ENCODE measurements at regions of chr2 and their contacts with region 1.

Region 1: DNA sequence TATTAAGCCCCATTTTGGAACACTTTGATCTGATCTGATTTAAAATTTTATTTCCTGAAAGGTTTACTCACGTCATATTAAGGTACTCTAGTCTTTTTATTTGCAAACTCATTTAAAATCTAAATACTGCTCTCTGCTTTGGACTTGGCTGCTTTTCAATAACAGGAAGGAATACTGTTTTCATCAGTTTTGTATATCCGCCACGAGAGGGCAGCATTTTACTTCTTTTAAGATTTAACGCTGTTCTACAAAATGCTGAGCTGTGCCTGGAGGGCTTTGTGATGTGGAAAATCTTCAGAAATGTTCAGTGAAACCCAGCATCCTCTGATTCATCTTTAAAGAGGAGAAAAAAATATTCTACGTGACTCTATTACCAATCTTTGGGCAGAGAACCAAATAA is 37.5 kb upstream of the SLC38A11 start:
- DNase-seq: peak; percentile 12
- ATAC-seq: peak; percentile 56; the same call in 1 of the 2 replicates
- H3K4me3 ChIP-seq: no peak overlapping the region
- H3K27ac ChIP-seq: no peak overlapping the region
- H3K4me1 ChIP-seq: no peaks in the 10 kb centered on the region
- H3K27me3 ChIP-seq: no peaks in the 10 kb centered on the region
- CTCF ChIP-seq: peak; percentile 35; the same call in 1 of the 2 replicates

Region 2: GRCh38 chr2:164456619-164457018 is 536.2 kb before region 1 on chr2:
- CTCF ChIA-PET with region 1: no interaction called
- POLR2A ChIA-PET with region 1: no interaction called
- in situ Hi-C with region 1: no loop called
- intact Hi-C with region 1: no loop called
- DNase-seq: no peak
- ATAC-seq: no peak
- H3K4me3 ChIP-seq: no peak overlapping the region
- H3K27ac ChIP-seq: no peak overlapping the region
- H3K4me1 ChIP-seq: no peaks in the 10 kb centered on the region
- H3K27me3 ChIP-seq: no peaks in the 10 kb centered on the region
- CTCF ChIP-seq: no peak

Region 3: GRCh38 chr2:165203689-165204559 is 211.1 kb after region 1 on chr2 and contains the start of gene SCN3A:
- CTCF ChIA-PET with region 1: interaction called, 8 read pairs
- POLR2A ChIA-PET with region 1: no interaction called
- in situ Hi-C with region 1: no loop called
- intact Hi-C with region 1: loop called (anchors 5 kb)
- DNase-seq: peak; percentile 22
- ATAC-seq: no peak
- H3K4me3 ChIP-seq: no peak within 1 kb of the TSS
- H3K27ac ChIP-seq: no peak within 1 kb of the TSS
- H3K4me1 ChIP-seq: no peaks in the 10 kb centered on the region
- H3K27me3 ChIP-seq: no peaks in the 10 kb centered on the region
- CTCF ChIP-seq: peak; percentile 80
- total RNA-seq, gene SCN3A: not detected

Region 4: GRCh38 chr2:165293440-165294353 is 300.9 kb after region 1 on chr2:
- CTCF ChIA-PET with region 1: no interaction called
- POLR2A ChIA-PET with region 1: no interaction called
- in situ Hi-C with region 1: no loop called
- intact Hi-C with region 1: loop called (anchors 5 kb)
- DNase-seq: peak; percentile 55
- ATAC-seq: peak; percentile 96
- H3K4me3 ChIP-seq: peak overlapping the region in 1 of 2 experiments; percentile 32; a peak in 1 of 4 replicates
- H3K27ac ChIP-seq: no peak overlapping the region
- H3K4me1 ChIP-seq: no peaks in the 10 kb centered on the region
- H3K27me3 ChIP-seq: no peaks in the 10 kb centered on the region
- CTCF ChIP-seq: peak; percentile 69